Activated CD4-positive, alpha-beta T cell treated with anti-CD3 and anti-CD28 coated beads, Interleukin-2, amount 10 ng/mL, durations not matched to agents 7 days and 5 days (primary cell): ENCODE measurements at regions of chr6 and their contacts with region 1.

Region 1: DNA sequence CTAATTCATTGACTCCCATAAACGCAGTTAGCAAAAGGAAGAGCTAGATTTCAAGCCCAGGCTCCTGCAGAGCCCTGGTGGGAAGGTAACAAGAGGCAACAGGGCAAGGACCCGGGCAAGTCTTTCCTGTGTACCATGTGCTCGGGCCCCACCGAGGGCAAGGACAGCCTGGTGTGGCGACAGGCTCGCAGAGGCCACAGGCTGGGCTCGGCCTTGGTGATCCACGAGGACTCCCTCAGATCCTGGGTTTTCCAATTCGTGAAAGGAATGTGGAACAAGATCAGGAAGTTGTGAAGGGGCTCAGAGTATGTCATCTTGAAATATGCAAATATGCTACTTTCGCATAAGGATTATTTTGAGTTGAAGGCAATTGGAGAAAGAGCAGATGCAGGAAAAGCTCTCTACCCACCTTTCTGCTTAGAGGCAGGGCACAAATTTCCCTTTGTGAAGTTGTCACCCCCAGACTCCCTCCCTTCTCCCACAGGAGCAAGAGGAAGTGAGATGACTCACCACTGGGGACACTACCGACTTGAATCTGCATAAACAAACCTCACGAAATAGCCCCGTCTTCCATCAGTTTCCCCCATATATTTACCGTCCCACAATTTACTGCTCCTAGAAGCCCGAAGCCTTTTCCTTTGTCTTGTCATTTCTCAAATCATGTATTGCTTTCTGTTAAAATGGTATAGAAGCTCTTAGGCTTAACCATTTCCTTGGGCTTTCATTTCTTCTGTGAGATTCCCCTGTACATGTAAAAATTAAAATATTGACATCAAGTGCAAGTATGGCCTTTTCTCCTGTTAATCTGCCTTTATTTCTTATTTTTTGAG is 79.0 kb downstream of the PSMG4 start:
- DNase-seq: no peak
- H3K4me3 Mint-ChIP-seq: no peak overlapping the region
- H3K27ac Mint-ChIP-seq: no peak overlapping the region
- H3K4me1 Mint-ChIP-seq: peaks cover 7% of the 10 kb centered on the region
- H3K27me3 Mint-ChIP-seq: peaks cover 5% of the 10 kb centered on the region

Region 2: DNA sequence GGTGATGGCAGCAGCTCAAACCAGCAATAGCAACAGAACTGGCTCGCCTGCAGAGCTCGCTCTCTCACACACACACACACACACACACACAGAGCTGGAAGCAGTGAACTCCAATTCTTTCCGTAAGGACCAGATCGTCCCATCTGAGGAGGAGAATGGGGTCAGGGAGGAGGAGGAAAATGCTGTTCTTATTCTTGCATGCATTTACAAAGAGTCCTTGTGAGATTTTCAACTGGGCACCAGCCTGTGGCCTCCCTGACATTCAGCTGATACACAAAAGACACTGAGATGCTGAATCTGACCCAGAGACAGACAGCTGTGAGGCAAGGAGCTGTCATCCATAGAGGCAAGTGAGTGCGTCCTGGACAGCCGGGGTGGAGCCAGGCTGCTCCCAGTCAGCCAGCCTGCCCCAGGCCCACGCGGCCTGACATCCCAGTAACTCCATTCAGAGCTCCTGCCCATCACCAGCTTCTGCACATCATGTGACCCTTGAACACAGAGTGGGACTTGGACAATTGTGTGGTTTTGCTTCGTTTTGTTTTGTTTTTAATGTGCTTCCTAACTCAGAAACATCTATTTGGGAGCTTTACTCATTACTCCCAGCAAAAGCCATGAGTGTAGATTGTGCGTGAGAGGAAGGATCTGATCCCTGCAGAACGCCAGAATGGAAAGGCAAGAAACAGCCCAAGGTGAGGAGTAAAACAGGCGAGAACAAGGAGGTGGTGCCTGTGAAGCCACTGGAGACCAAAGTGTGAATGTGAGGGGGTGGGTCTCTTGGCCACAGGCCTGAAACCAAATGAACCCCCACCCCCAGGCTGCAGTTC is 436.7 kb before region 1 on chr6:
- CTCF ChIA-PET with region 1: no interaction called
- POLR2A ChIA-PET with region 1: no interaction called
- DNase-seq: no peak
- H3K4me3 Mint-ChIP-seq: peak overlapping the region; percentile 99
- H3K27ac Mint-ChIP-seq: peak overlapping the region; percentile 64
- H3K4me1 Mint-ChIP-seq: peaks cover 59% of the 10 kb centered on the region
- H3K27me3 Mint-ChIP-seq: peaks cover 2% of the 10 kb centered on the region

Region 3: GRCh38 chr6:3322366-3322890 is 15.3 kb before region 1 on chr6:
- CTCF ChIA-PET with region 1: interaction called, 10 read pairs
- POLR2A ChIA-PET with region 1: no interaction called
- DNase-seq: no peak
- H3K4me3 Mint-ChIP-seq: no peak overlapping the region
- H3K27ac Mint-ChIP-seq: no peak overlapping the region
- H3K4me1 Mint-ChIP-seq: peaks cover 18% of the 10 kb centered on the region
- H3K27me3 Mint-ChIP-seq: peaks cover 17% of the 10 kb centered on the region

Region 4: GRCh38 chr6:3372007-3372846 is 34.5 kb after region 1 on chr6:
- CTCF ChIA-PET with region 1: no interaction called
- POLR2A ChIA-PET with region 1: no interaction called
- DNase-seq: no peak
- H3K4me3 Mint-ChIP-seq: no peak overlapping the region
- H3K27ac Mint-ChIP-seq: no peak overlapping the region
- H3K4me1 Mint-ChIP-seq: peaks cover 14% of the 10 kb centered on the region
- H3K27me3 Mint-ChIP-seq: no peaks in the 10 kb centered on the region